PC-9 (cell line): ENCODE measurements at regions of chr14 and their contacts with region 1.

Region 1: GRCh38 chr14:68655021-68655831 is 137.6 kb downstream of the ZFP36L1 start:
- DNase-seq: no peak
- H3K4me3 ChIP-seq: no peak overlapping the region
- H3K27ac ChIP-seq: no peak overlapping the region
- H3K4me1 ChIP-seq: peaks cover 41% of the 10 kb centered on the region
- H3K27me3 ChIP-seq: no peaks in the 10 kb centered on the region
- CTCF ChIP-seq: no peak

Region 2: DNA sequence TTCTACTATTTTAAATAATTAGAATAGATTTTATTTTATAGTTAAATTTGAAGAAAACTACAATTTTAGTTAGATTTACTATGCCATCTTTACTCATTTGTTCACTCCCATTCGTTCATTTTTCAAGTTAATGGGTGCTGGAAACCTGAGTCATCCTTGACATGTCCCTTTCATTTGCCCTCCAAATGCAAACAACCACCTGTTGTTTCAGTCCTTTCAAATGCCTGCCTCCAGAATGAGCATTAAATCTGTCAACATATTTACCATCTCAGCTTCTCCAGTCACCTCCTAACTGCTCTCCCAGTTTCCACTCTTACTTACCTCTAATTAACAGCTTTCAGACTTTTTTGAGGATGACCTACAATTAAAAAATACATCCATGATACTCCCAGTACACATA is 460.1 kb before region 1 on chr14:
- CTCF ChIA-PET with region 1: no interaction called
- POLR2A ChIA-PET with region 1: interaction called, 14 read pairs
- intact Hi-C with region 1: no loop called
- DNase-seq: no peak
- H3K4me3 ChIP-seq: no peak overlapping the region
- H3K27ac ChIP-seq: no peak overlapping the region
- H3K4me1 ChIP-seq: peaks cover 26% of the 10 kb centered on the region
- H3K27me3 ChIP-seq: no peaks in the 10 kb centered on the region
- CTCF ChIP-seq: no peak

Region 3: DNA sequence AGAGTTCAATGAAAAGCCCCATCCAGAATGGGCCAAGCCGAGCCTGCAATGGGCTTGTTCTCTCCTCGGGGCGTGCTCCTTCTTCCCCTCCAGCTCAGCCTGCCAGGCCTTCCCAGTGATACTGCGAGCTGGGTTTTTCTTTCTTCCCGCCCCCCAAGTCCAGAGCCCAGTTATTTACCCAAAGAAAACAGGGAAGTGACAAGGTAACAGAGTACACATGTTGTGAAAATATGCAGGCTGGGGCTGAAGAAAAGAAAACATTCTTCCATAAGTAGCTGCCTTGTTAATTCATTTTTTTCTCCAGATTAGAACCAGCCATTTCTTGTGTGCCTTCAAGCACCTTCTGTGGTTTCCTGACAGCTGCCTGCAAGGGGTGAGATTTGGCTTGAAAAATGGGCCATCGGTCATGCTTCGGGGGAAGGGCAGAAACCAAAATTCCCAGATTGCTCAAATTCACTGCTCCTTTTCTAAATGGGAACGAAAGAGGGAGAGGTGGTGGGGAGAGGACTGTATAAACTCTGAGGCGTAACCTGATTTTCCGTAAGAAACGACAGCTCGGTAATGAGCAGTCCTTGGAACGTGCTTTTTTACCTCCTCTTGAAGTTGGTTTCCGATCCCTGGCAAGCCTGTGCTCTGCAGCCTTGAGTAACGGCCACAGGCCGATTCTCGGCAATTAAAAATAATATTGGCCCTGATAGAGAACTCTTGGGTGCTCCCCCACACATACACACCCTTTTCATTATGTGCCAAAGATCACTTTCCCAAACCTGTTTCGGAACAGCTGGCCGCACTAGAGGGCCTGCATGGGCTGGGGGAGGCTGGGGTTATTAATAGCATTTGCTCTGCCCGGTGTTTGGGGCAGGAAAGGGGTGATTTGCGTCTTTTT is 91.7 kb before region 1 on chr14:
- CTCF ChIA-PET with region 1: interaction called, 8 read pairs
- POLR2A ChIA-PET with region 1: interaction called, 10 read pairs
- intact Hi-C with region 1: no loop called
- DNase-seq: peak in 1 of 2 experiments; percentile 90
- H3K4me3 ChIP-seq: peak overlapping the region; percentile 64
- H3K27ac ChIP-seq: peak overlapping the region; percentile 96
- H3K4me1 ChIP-seq: peaks cover 73% of the 10 kb centered on the region
- H3K27me3 ChIP-seq: no peaks in the 10 kb centered on the region
- CTCF ChIP-seq: no peak